Activated CD4-positive, alpha-beta T cell treated with anti-CD3 and anti-CD28 coated beads for 36 hours (primary cell): ENCODE measurements at regions of chr4 and their contacts with region 1.

Region 1: DNA sequence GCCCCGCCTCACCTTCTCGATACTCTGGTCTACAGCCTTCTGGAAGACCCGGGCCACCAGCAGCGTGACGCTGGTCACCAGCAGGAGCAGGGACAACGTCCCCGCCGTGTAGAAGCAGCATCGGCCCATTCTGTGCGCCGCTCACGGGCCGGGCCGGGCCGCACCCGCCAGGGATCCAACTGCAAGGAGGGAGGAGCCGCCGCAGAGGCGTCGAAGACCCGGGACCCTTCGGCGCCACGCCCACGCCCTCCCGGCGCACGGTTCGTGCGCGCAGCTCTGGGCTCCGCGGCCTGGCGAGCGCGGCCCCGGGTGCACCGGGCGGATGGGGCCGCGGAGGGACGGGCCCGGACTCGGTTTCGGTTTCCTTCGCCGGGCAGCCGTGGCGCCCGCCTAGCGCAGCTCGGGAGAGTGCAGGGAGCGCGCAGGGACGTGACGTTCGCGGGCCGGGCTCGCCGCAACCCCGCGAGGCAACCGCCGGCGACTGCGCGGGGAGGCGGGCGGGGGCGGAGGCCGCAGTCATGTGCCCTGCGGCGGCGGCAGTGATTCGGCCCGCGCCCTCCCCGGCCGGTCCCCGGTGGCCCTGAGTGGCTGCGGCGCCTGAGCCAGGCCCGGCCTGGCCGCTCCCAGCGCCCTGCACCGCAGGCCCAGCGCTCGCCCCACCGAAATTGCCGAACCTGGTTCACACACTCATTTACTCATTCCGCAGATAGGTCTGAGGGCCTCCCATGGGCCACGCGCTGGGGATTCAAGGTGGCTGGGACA is at the start of gene SCARB2:
- DNase-seq: peak; percentile 79
- ATAC-seq: peak; percentile 68
- H3K4me3 Mint-ChIP-seq: peak within 1 kb of the TSS; percentile 75
- H3K27ac Mint-ChIP-seq: peak within 1 kb of the TSS; percentile 78
- H3K4me1 Mint-ChIP-seq: peaks cover 32% of the 10 kb centered on the region
- H3K27me3 Mint-ChIP-seq: no peaks in the 10 kb centered on the region
- total RNA-seq, gene SCARB2: 3.3 to 4.6 TPM

Region 2: DNA sequence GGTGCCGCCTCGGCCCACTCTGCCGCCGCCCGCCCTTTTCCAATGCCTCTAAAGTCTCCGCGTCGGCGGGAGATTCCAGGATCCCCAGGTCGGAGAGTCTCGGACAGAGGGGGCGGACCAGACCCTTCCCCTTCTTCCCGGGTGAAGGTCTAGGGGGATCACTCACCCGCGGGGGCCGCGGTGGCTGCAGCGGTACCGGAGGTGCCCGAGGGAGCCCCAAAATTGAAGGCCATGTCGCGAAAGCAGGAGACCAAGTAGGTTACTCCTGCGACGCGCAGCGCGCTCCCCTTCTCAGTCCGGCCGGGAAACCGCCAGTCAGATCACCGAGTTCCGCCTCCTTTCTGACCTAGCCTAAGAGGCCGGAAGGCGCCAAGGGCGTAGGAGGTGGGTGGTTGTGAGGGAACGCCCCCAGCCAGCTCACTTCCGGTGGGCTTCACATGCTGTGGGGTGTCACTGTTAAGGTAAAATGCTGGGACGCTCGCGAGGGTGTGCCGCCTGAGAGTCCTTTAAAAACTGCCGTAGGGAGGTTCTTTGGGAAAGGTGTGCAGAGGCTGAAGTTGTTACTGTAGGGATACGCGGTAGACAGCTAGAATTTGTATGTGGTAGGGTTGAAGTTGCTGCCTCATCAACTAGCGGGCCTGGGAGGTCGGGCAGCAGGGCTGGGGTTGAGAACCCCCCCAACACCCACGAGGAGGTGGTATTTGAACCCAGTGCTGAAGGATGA is 65.3 kb before region 1 on chr4 and contains the start of gene NUP54:
- CTCF ChIA-PET with region 1: no interaction called
- POLR2A ChIA-PET with region 1: no interaction called
- intact Hi-C with region 1: loop called (anchors 1 to 5 kb)
- DNase-seq: peak; percentile 97
- ATAC-seq: peak; percentile 97
- H3K4me3 Mint-ChIP-seq: peak within 1 kb of the TSS; percentile 86
- H3K27ac Mint-ChIP-seq: peak within 1 kb of the TSS; percentile 89
- H3K4me1 Mint-ChIP-seq: peaks cover 25% of the 10 kb centered on the region
- H3K27me3 Mint-ChIP-seq: no peaks in the 10 kb centered on the region
- total RNA-seq, gene NUP54: 58.2 to 67.3 TPM

Region 3: GRCh38 chr4:76198411-76199237 is 15.0 kb before region 1 on chr4:
- CTCF ChIA-PET with region 1: interaction called, 8 read pairs
- POLR2A ChIA-PET with region 1: interaction called, 3 read pairs
- intact Hi-C with region 1: loop called (anchors 1 kb)
- DNase-seq: peak; percentile 79
- ATAC-seq: peak; percentile 79
- H3K4me3 Mint-ChIP-seq: peak overlapping the region; percentile 7
- H3K27ac Mint-ChIP-seq: peak overlapping the region; percentile 81
- H3K4me1 Mint-ChIP-seq: peaks cover 48% of the 10 kb centered on the region
- H3K27me3 Mint-ChIP-seq: no peaks in the 10 kb centered on the region

Region 4: DNA sequence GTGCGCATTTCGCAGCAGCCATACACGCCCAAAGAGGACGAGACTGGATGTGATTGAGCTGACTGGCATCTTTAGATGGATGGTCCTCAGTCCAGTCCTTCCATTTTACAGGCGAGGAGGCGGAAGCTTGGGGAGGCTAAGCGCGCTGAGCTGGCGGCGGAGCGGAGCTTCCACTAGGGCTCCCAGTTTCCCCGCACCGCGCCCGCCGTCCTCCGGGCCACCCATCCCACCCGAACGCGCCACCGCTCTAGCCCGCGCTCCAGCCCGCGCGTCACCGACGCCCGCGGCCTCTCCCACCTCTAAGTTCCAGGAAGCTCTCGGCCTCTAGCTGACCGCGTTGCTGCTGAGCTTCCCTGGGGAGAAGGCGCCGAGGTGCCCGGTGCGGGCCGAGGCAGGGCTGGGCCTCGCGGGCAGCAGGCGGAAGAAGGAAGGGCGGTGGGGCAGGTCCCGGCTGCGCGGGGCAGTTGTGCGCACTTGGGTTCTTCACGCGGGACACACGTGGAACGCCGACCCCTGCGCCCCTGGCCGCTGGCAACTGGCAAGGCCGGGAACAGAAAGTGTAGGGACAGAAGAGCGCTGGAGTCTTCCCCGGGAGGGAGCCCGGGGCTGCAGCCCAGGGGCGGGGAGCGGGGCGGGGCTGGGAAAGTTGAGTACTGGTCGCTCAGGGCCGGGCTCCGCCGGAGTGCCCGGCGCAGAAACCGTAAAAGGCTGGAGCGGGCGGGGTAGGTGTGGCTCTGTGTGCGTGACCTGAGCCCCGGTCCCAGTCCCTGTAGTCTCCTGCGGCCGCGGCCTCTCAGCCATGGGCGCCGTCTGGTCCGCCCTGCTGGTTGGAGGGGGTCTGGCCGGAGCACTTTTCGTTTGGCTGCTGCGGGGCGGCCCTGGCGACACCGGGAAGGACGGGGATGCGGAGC is 92.6 kb after region 1 on chr4 and contains the start of gene STBD1:
- CTCF ChIA-PET with region 1: no interaction called
- POLR2A ChIA-PET with region 1: no interaction called
- intact Hi-C with region 1: loop called in 1 of 2 experiments (anchors 5 kb)
- DNase-seq: peak; percentile 40
- ATAC-seq: peak; percentile 14
- H3K4me3 Mint-ChIP-seq: peak within 1 kb of the TSS; percentile 63
- H3K27ac Mint-ChIP-seq: peak within 1 kb of the TSS; percentile 34
- H3K4me1 Mint-ChIP-seq: peaks cover 22% of the 10 kb centered on the region
- H3K27me3 Mint-ChIP-seq: peaks cover 39% of the 10 kb centered on the region
- total RNA-seq, gene STBD1: 0.09 to 0.14 TPM